SK-N-SH (cell line): ENCODE measurements at regions of chr17 and their contacts with region 1.

Region 1: DNA sequence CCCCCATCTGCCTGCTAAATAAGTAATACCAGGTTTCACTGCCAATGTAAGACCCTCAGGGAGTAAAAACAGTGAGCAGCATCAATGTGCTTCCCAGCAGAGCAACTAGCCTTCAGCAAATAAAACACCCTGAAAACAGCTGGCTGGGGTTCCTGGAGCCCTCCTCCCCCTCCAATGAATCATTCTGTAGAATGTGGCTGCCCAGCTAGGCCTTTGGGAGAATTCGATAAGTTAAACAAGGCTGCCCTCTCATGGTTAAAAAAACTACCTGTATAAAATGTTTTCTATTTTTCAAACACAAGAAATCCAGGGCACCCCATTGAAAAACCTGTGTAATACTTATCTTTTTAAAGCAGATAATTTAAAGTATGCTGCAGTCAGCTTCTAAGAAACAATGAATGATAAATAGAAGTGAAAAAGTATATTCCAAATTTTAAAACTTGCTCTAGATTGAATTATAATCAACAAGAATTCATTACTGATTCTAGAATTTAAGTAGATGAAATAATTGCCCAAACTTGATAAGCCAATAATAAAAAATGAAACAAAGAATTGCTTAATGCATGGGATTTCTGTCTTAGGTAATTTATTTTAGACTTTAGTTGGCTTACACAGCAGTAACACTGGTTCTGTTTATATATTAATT is 9.4 kb upstream of the TOM1L1 start:
- DNase-seq: peak; percentile 76
- H3K4me3 ChIP-seq: no peak overlapping the region
- H3K27ac ChIP-seq: 0 out of 4 replicates have a peak overlapping the region, but pooled peaks of 1 of the 2 experiments have one; percentile 35
- H3K4me1 ChIP-seq: peaks cover 0 to 2% of the 10 kb centered on the region in 2 experiments; a peak in 1 of 4 replicates
- H3K27me3 ChIP-seq: no peaks in the 10 kb centered on the region
- CTCF ChIP-seq: peak; percentile 87
- EP300 ChIP-seq: peak in 1 of 2 experiments; percentile 64; a peak in 1 of 4 replicates
- RAD21 ChIP-seq: peak; percentile 99

Region 2: DNA sequence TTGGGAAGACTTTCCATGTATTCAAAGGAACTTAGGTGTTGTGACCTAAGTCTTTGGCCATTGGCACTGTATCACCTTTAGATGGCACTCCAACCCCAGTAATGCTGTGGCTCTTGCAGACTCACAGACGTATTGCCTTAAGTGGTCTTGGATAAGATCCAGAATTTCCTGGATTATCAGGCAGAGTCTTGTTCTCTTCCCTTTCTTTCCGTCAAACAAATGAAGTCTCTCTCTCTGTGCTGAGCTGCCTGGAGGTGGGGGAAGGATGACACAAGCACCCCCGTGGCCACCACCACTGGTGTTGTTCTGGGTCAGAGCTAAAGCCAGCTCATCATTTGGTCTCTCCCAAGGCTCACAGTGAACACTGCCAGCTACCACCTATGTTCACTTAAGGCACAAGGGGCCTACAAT is 1858.4 kb before region 1 on chr17:
- CTCF ChIA-PET with region 1: interaction called, 10 read pairs
- POLR2A ChIA-PET with region 1: no interaction called
- DNase-seq: peak; percentile 21
- H3K4me3 ChIP-seq: no peak overlapping the region
- H3K27ac ChIP-seq: no peak overlapping the region
- H3K4me1 ChIP-seq: peaks cover 0 to 2% of the 10 kb centered on the region in 2 experiments; a peak in 1 of 4 replicates
- H3K27me3 ChIP-seq: no peaks in the 10 kb centered on the region
- CTCF ChIP-seq: peak; percentile 48
- EP300 ChIP-seq: no peak
- RAD21 ChIP-seq: peak; percentile 91

Region 3: DNA sequence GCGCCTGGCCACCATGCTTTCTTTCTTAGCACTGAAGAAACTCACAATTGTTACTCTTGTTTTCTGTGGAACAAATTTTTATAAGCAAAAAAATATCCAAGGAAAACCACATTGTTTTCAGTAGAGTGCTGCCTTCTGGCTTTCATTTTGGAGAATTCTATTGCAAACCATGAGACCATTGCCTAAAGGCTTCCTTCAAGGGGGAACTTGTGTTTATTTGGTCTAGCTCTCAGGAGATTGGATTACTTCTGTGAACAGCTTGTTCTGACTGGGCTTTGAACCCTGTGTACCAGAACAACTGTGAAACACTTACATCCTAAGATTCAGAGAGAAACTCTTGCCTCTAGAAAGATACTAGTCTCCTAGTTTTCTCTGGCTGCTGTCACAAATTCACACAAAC is 41.4 kb after region 1 on chr17:
- CTCF ChIA-PET with region 1: no interaction called
- POLR2A ChIA-PET with region 1: no interaction called
- DNase-seq: no peak
- H3K4me3 ChIP-seq: no peak overlapping the region
- H3K27ac ChIP-seq: no peak overlapping the region
- H3K4me1 ChIP-seq: no peaks in the 10 kb centered on the region
- H3K27me3 ChIP-seq: no peaks in the 10 kb centered on the region
- CTCF ChIP-seq: no peak
- EP300 ChIP-seq: no peak
- RAD21 ChIP-seq: no peak